ENCODE measurements at regions of chr13 and their contacts with region 1.

Region 1: GRCh38 chr13:40682449-40683240 is 16.2 kb upstream of the FOXO1 start:
- DNase-seq: no peak
- H3K4me3 Mint-ChIP-seq: no peak overlapping the region
- H3K27ac Mint-ChIP-seq: no peak overlapping the region
- H3K4me1 Mint-ChIP-seq: peaks cover 6% of the 10 kb centered on the region
- H3K27me3 Mint-ChIP-seq: no peaks in the 10 kb centered on the region

Region 2: DNA sequence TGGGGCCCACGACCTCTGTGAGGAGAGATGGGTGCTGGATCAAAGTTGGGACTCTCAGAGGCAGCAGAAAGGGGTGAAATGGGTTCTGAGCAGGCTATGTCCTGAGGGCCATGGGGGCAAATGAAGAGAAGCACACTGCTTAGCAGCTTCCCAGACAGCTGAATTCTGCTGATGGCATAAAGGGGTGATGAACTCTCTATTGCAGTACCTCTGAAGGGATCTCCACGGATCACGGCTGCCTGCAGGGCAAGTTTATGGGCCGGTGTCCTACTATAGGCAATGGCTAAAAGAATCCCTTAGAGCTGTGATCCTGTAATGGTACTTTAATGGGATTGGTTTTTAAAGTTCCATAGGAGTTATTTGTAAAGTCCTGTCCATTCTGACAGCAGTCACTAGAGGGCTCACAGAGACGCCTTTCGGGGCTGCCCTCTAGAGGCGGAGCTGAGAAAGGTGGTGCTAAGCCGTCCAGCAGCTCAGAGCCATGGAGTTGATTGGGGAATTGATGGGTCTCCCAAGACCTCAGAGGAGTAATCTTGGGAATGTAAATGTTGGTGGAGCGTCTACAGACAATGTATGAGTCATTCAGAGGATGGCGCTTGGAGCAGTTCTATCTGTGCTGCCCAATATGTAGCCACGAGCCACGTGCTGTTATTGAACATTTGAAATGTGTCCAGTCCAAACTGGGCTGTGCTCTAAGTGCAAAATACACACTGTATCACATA is 739.9 kb before region 1 on chr13:
- CTCF ChIA-PET with region 1: interaction called, 30 read pairs
- POLR2A ChIA-PET with region 1: no interaction called
- DNase-seq: peak; percentile 69
- H3K4me3 Mint-ChIP-seq: no peak overlapping the region
- H3K27ac Mint-ChIP-seq: no peak overlapping the region
- H3K4me1 Mint-ChIP-seq: peaks cover 3% of the 10 kb centered on the region
- H3K27me3 Mint-ChIP-seq: no peaks in the 10 kb centered on the region

Region 3: DNA sequence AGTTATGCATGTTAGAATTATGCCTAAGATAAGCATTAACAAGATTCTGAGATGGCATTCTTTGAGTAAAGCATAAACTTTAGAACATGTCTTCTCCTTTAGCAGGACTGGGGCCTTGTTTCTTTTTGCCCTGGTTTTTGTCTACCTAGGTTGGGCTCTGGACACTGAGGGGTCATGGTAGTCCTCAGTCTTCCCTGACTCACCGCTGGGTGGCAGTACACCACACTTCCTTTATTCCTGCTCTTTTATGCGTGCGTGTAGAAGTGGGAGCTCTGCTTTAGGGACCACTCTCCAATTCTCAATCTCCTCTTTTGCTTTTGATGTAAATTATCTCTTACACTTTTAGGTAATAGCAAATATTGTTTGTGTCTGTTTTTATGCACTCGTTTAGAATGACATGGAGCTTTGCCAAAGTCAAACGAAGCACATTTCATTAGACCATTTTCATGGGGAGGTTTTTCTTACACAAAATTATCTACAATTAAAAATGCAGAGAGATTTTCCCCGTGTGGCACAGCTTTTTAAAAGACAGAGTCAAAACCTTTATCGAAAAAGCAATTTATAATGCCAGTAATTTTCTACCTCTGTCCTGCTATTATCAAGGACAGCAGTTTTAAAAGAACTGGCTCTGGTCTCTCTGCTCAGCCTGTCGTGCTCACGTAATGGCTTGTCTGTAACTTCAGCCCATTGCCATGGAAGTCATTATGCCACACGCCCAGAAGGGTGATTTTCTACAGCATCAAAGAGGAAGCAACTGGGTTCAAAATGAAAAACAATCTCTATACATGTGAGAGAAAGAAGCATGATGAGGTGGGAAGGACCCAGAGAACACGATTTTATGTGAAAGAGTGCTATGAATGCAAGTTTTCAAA is 613.2 kb before region 1 on chr13:
- CTCF ChIA-PET with region 1: interaction called, 58 read pairs
- POLR2A ChIA-PET with region 1: interaction called, 7 read pairs
- DNase-seq: peak; percentile 72
- H3K4me3 Mint-ChIP-seq: no peak overlapping the region
- H3K27ac Mint-ChIP-seq: no peak overlapping the region
- H3K4me1 Mint-ChIP-seq: peaks cover 15% of the 10 kb centered on the region
- H3K27me3 Mint-ChIP-seq: no peaks in the 10 kb centered on the region

Region 4: DNA sequence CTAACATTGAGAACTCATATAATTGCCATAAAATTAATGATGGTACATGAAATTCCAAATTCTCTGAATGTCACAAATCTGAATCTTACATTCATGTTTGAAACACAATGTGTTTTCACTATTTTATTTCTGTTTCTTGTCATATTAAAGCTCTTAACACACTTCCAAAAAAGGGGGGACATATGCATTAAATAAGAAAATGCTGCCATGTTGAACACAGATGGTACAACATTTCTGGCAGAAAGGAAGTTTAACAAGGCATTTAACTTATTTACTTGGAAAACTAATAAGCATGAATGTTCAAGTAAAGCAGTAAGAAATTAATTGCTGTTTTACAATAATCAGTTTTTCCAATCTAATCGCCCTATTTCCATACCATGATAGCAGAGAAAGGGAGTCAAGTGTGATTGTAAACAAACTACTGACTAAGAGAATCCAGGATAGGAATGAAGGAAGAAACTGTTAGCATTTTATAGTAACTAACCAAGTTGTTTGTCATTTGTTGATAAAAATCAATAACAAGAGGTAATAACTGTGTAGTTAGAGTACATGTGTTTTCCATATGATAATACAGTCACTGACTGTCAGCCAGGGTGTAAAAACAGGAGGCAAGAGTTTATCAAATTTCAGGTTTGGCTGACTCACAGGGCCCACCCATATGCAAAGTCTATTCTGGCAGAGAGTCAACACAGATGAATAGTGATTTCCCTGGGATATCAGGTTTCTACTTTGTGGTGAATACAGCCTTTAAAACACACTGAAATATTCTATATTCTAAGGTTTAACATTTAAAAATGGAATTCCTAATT is 10.5 kb before region 1 on chr13:
- CTCF ChIA-PET with region 1: interaction called, 15 read pairs
- POLR2A ChIA-PET with region 1: interaction called, 3 read pairs
- DNase-seq: no peak
- H3K4me3 Mint-ChIP-seq: no peak overlapping the region
- H3K27ac Mint-ChIP-seq: no peak overlapping the region
- H3K4me1 Mint-ChIP-seq: peaks cover 38% of the 10 kb centered on the region
- H3K27me3 Mint-ChIP-seq: no peaks in the 10 kb centered on the region

Region 5: DNA sequence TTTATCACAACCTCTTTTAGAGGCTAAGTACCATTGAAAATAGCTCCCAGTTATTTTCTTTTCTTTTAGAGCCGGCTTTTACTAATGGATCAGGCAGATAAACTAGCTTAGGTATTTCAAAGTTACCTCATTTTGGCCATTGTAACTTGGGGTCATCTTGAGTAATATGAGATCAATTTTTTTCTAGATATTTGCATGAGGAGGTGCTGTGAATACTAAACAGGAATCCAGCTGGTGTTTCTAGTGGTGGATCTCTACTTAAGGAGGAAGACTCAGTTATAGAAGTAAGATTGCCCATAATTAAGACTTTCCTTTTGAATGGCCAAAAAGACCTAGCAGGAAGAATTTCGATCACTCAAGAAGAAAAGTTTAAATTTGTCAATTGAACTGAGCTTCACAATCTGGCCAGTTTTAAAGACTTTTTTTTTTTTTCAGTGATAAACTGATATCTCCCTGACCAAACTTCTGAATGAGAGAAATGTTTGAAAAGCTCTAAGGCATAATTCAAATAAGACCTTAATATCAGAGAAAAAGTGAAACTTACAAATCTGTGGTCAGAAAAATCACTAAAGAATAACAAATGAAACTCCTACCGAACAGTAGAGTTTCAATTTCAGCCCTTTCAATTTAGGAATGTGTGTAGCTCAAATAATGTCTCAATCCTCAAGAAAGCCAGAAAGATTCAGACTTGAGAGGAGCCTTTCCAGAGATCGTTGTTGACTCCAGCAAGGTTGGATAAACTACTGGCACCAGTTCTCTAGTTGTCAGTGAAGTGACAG is 616.9 kb after region 1 on chr13:
- CTCF ChIA-PET with region 1: no interaction called
- POLR2A ChIA-PET with region 1: no interaction called
- DNase-seq: no peak
- H3K4me3 Mint-ChIP-seq: no peak overlapping the region
- H3K27ac Mint-ChIP-seq: no peak overlapping the region
- H3K4me1 Mint-ChIP-seq: peaks cover 3% of the 10 kb centered on the region
- H3K27me3 Mint-ChIP-seq: peaks cover 21% of the 10 kb centered on the region